Activated CD4-positive, alpha-beta T cell treated with anti-CD3 and anti-CD28 coated beads for 36 hours (primary cell): ENCODE measurements at regions of chr3 and their contacts with region 1.

Region 1: DNA sequence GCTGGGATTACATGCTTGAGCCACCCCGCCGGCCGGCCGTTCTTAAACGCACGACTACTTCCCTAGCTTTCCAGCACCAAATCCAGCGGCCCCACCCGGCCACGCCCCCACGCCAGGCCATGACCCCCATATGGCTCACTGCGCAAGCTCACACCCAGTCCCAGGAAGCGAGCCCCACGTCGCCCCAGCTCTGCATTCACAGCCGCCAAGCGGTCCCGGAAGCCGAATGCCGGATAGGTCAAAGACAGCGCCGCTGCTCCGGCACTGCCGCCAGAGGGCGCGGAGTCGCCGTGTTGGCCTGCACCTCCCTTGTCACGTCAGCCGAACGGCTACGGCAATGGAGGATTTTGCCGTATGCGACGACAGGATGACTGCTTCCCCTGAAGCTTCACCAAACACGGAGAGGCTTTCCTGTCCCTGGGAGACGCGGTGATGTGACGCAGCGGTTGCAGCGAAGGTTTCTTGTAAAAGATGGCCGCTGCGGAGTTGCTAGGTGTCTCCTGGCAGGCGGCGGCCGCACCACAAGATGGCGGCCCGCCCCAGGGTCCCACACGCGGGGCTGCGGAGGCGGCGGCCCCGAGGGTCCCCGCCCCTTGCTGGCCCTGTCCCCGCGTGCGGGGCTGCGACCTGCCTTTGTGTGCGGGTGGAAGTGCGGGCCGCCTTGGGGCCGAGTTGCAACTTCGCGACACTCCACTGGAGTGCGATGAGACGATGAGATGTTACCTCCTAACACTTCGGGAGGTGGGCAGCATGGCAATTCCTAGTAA is 30.2 kb upstream of the RPN1 start:
- DNase-seq: peak; percentile 98
- ATAC-seq: peak; percentile 98
- H3K4me3 Mint-ChIP-seq: peak overlapping the region; percentile 96
- H3K27ac Mint-ChIP-seq: peak overlapping the region; percentile 99
- H3K4me1 Mint-ChIP-seq: peaks cover 31% of the 10 kb centered on the region
- H3K27me3 Mint-ChIP-seq: no peaks in the 10 kb centered on the region

Region 2: GRCh38 chr3:127884041-127884440 is 796.7 kb before region 1 on chr3:
- CTCF ChIA-PET with region 1: no interaction called
- POLR2A ChIA-PET with region 1: no interaction called
- intact Hi-C with region 1: no loop called
- DNase-seq: no peak
- ATAC-seq: no peak
- H3K4me3 Mint-ChIP-seq: no peak overlapping the region
- H3K27ac Mint-ChIP-seq: no peak overlapping the region
- H3K4me1 Mint-ChIP-seq: no peaks in the 10 kb centered on the region
- H3K27me3 Mint-ChIP-seq: peaks cover 13% of the 10 kb centered on the region

Region 3: DNA sequence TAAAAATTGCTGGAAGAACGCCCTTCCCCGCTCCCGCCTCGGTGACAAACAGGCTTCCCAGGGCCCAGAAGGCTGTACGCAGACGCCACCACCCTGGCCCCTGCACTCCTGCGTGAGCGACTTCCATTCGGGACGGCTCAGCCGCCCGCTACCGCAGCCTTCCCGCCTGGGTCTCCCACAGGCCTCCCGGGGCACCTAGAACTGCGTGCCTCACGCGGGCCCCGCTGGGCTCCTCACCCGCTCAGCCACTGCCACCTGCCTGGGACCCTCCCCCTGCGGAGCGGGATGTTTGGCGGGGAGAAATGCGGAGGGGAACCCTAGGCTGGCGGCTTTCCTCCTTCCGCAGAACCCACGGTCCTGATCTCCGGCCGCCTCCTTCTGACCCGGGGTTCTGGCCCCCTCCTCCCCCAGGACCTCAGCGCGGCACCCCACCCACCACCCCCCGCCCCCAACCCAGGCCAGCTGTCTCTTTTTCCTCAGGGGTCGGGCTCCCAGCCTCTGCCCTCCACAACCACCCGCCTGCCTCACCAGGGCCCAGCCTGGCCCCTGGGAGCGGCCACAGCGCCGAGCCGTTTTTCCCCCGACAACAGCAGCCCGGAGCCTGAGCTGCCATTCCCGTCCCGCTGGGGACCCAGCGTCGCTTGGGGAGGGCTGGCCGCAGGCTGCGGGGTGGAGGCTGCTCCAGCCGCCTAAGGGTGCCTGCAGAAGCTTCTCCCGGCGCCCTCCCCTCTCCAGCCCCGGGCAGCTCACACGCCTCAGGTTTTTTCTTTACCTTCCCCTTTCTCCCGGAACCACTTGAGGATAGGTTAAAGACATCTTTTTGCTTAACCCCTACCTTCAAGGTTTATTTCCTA is 17.7 kb after region 1 on chr3:
- CTCF ChIA-PET with region 1: interaction called, 15 read pairs
- POLR2A ChIA-PET with region 1: no interaction called
- intact Hi-C with region 1: no loop called
- DNase-seq: peak; percentile 44
- ATAC-seq: peak; percentile 71
- H3K4me3 Mint-ChIP-seq: peak overlapping the region; percentile 59
- H3K27ac Mint-ChIP-seq: no peak overlapping the region
- H3K4me1 Mint-ChIP-seq: peaks cover 2% of the 10 kb centered on the region
- H3K27me3 Mint-ChIP-seq: no peaks in the 10 kb centered on the region

Region 4: GRCh38 chr3:128760042-128760441 is 79.3 kb after region 1 on chr3:
- CTCF ChIA-PET with region 1: interaction called, 17 read pairs
- POLR2A ChIA-PET with region 1: interaction called, 3 read pairs
- intact Hi-C with region 1: no loop called
- DNase-seq: no peak
- ATAC-seq: no peak
- H3K4me3 Mint-ChIP-seq: no peak overlapping the region
- H3K27ac Mint-ChIP-seq: no peak overlapping the region
- H3K4me1 Mint-ChIP-seq: peaks cover 54% of the 10 kb centered on the region
- H3K27me3 Mint-ChIP-seq: no peaks in the 10 kb centered on the region

Region 5: DNA sequence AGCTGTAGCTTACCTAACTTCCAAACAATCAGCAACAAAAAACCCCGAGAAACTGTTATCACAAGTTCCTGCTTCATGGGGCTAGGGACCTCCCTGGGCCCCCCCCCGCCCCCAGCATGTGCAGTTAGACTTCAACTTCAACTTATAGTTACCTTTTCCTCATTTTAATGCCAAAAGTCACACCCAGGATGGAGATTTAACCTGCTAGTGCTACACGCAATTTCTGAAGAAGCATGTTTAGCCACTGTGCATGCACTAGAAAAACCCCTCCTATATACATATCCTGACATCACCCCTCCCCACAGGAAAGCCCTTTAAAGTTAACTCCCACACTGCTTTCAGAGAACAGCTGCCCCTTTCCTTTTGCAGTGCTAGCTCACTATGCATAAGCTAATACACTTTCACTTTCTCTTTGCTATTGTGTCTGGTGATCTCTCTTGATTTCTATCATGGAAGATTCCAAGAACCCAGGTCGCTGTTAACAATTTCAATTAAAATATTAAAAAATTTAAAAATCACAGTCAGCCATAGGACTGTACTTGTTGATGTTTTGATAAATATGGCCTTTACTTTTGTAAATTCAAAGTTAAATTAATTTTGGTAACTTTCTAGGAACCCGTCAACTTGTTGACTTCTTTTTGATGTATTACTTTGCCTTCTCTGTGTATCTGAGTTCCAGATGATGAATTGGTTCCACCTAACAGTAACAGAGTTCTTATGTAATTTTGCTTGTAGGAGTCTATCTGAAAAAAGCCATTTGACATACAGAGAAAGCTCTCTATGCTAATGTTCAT is 123.4 kb after region 1 on chr3:
- CTCF ChIA-PET with region 1: interaction called, 31 read pairs
- POLR2A ChIA-PET with region 1: interaction called, 6 read pairs
- intact Hi-C with region 1: loop called (anchors 1 kb)
- DNase-seq: peak; percentile 78
- ATAC-seq: peak; percentile 76
- H3K4me3 Mint-ChIP-seq: peak overlapping the region; percentile 69
- H3K27ac Mint-ChIP-seq: peak overlapping the region; percentile 97
- H3K4me1 Mint-ChIP-seq: peaks cover 86% of the 10 kb centered on the region
- H3K27me3 Mint-ChIP-seq: no peaks in the 10 kb centered on the region

Region 6: GRCh38 chr3:128950223-128950938 is 269.6 kb after region 1 on chr3:
- CTCF ChIA-PET with region 1: no interaction called
- POLR2A ChIA-PET with region 1: no interaction called
- intact Hi-C with region 1: loop called in 1 of 2 experiments (anchors 5 kb)
- DNase-seq: peak; percentile 61
- ATAC-seq: peak; percentile 89
- H3K4me3 Mint-ChIP-seq: no peak overlapping the region
- H3K27ac Mint-ChIP-seq: no peak overlapping the region
- H3K4me1 Mint-ChIP-seq: no peaks in the 10 kb centered on the region
- H3K27me3 Mint-ChIP-seq: no peaks in the 10 kb centered on the region